ENCODE measurements at regions of chr3 and their contacts with region 1.

Region 1: DNA sequence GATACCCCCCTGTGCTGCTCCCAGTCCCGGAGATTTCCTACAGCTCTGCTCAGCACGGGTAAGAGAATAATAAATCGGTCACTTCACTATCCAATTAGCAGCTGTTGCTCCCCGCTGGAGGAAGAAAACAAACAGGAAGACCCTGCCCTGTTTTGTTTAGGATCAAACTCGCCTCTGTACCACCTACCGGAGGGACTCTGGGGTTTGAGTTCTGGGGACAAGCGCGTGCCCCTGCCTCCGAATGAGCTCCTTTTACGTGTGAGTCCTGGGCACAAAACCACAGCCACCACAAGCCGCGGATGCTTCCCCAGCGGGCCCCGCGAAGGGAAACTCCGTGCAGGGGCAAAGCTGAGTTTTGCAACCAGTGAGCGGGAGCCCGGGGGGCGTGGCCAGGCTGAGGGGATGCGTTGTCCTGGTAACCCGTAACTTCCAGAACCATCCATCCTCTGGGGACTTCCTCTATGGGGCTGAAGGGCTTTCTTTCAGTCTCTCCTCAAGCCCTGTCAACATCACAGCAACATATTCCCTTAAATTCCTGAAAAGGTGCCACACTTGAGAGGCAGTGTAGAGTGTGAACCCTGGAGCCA is 315.7 kb upstream of the PROK2 start:
- DNase-seq: peak; percentile 91
- ATAC-seq: peak; percentile 60
- H3K4me3 Mint-ChIP-seq: peak overlapping the region; percentile 83
- H3K27ac Mint-ChIP-seq: peak overlapping the region; percentile 84
- H3K4me1 Mint-ChIP-seq: peaks cover 73% of the 10 kb centered on the region
- H3K27me3 Mint-ChIP-seq: no peaks in the 10 kb centered on the region
- CTCF ChIP-seq: no peak

Region 2: GRCh38 chr3:71905426-71905825 is 195.3 kb before region 1 on chr3:
- CTCF ChIA-PET with region 1: no interaction called
- POLR2A ChIA-PET with region 1: no interaction called
- intact Hi-C with region 1: loop called (anchors 1 kb)
- DNase-seq: no peak
- ATAC-seq: peak; percentile 90
- H3K4me3 Mint-ChIP-seq: peak overlapping the region; percentile 52
- H3K27ac Mint-ChIP-seq: no peak overlapping the region
- H3K4me1 Mint-ChIP-seq: peaks cover 42% of the 10 kb centered on the region
- H3K27me3 Mint-ChIP-seq: peaks cover 73% of the 10 kb centered on the region
- CTCF ChIP-seq: no peak

Region 3: GRCh38 chr3:72134989-72135451 is 34.3 kb after region 1 on chr3:
- CTCF ChIA-PET with region 1: no interaction called
- POLR2A ChIA-PET with region 1: interaction called, 4 read pairs
- intact Hi-C with region 1: loop called (anchors 1 kb)
- DNase-seq: no peak
- ATAC-seq: peak; percentile 85
- H3K4me3 Mint-ChIP-seq: peak overlapping the region; percentile 3
- H3K27ac Mint-ChIP-seq: peak overlapping the region; percentile 18
- H3K4me1 Mint-ChIP-seq: peaks cover 37% of the 10 kb centered on the region
- H3K27me3 Mint-ChIP-seq: no peaks in the 10 kb centered on the region
- CTCF ChIP-seq: no peak

Region 4: DNA sequence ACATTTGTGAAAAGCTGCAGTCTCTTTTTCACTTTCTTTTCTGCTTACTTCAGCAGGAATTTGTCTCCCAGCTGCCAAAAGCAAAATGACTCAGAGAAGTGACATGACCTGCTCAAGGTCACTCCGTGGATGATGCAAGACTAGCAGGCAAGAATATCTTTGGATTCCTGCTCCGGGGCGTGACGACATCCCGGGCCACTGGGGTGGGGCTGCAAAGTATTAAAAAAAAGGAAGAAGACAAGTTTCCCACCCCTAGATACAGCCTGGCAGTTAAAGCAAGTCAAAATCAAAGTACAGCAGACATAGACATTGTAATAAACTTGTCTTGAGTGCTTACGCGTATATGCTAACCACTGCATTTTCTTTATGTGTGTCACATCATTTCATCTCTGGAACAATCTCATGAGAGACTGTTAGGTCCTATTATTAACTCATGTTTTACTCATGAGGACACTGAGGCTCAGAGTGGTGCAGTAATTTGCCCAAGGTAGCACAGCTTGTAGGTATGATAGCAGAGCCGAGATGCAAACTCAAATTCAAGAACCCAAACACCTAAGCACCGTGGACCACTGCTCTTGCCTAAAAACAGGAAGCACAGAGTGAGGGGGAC is 169.5 kb after region 1 on chr3:
- CTCF ChIA-PET with region 1: no interaction called
- POLR2A ChIA-PET with region 1: interaction called, 3 read pairs
- intact Hi-C with region 1: loop called (anchors 5 kb)
- DNase-seq: no peak
- ATAC-seq: no peak
- H3K4me3 Mint-ChIP-seq: peak overlapping the region; percentile 38
- H3K27ac Mint-ChIP-seq: no peak overlapping the region
- H3K4me1 Mint-ChIP-seq: peaks cover 94% of the 10 kb centered on the region
- H3K27me3 Mint-ChIP-seq: no peaks in the 10 kb centered on the region
- CTCF ChIP-seq: no peak

Region 5: DNA sequence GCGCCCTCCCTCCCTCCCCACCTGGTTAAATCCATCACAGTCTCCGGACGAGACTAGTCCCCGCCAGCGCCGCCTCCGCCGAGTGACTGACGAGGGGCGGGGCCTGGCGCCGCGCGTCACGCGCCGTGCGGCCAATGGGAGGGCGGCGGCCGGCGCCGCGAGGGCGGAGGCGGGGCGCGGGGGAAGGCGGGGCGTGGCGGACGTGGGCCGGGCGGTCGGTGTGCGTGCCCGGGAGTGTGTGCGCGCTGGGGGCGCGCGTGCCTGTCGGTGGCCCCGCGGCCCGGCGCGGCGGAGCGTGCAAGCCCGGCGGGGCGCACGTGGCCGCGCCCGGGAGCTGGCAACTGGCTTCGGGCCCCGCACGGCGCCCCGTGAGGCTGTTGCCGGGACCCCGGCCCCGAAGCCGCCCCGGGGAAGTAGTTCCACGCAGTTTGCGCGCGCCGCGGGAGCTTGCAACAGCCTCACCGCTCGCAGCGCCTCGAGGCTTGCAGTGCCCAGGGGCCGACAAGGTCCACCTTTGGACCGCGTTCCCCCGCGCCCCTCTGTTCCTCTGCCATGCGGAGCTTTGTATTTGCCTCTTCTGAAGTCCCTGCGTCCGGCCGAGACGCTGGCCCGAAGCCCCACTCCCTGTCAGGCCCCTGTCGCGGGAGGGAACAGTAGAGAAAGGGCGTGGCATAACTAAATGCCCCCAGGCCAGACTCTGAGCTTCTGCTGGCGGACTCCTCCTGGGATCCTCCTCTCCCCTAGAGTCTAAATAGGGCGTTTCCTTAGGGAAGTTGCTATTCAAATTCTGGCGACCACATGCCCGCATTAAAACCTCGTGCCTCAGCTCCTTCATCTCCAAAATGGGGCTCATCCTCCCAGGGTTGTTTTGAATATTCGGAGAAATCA is 346.6 kb after region 1 on chr3:
- CTCF ChIA-PET with region 1: interaction called, 3 read pairs
- POLR2A ChIA-PET with region 1: interaction called, 4 read pairs
- intact Hi-C with region 1: loop called (anchors 2 kb)
- DNase-seq: peak; percentile 97
- ATAC-seq: peak; percentile 96
- H3K4me3 Mint-ChIP-seq: peak overlapping the region; percentile 78
- H3K27ac Mint-ChIP-seq: peak overlapping the region; percentile 31
- H3K4me1 Mint-ChIP-seq: peaks cover 47% of the 10 kb centered on the region
- H3K27me3 Mint-ChIP-seq: peaks cover 17% of the 10 kb centered on the region
- CTCF ChIP-seq: no peak

Region 6: DNA sequence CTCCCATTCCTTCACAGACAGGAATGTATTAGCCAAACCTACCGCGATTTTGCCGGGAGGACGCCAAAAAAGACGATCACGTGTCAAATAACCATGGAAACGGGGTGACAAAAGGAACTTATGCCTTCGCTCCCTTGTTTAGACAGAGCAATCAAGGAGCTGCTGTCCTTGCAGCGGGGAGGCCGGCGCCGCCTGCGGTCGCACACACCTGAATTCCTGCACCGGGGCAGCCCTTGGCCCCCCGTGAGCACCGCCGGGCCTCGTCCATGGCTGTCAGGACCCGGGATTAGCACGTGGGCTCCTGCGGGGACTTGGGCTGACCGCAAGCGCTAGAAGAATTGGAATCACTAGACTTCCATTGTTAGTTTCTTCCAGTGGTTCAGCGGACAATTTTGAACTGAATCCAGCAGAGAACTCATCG is 554.4 kb after region 1 on chr3:
- CTCF ChIA-PET with region 1: no interaction called
- POLR2A ChIA-PET with region 1: no interaction called
- intact Hi-C with region 1: no loop called
- DNase-seq: no peak
- ATAC-seq: no peak
- H3K4me3 Mint-ChIP-seq: no peak overlapping the region
- H3K27ac Mint-ChIP-seq: no peak overlapping the region
- H3K4me1 Mint-ChIP-seq: no peaks in the 10 kb centered on the region
- H3K27me3 Mint-ChIP-seq: peaks cover 25% of the 10 kb centered on the region
- CTCF ChIP-seq: no peak

Region 7: DNA sequence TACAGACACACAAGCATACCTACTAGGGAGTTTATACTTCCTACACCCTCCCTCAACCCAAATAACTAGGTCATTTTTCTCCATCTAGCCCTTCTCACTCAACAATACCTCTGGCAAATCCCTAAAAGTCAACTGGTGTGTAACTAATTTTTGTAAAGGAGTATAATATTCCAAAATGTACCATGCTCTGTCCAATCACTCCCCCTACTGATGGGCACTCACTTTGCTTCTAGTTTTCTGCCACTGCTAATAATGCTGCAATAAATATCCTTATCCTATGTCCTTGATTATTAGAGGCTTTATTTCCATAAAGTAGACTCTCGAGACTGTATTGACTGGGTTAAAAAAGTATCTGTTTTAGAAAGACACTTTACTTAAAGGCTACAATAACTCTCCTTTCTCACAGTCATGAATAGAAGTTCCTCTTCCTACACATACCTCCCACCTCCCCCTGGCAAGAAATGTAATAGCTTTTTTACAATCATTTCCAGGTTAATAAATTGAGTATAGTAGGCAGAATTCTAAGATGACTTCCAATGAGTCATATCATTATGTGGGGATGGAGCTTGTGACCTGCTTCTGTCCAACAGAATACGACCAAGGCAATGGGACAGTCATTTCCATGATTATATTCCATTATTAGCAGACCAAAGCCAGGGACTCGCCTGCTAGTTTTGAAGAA is 717.5 kb after region 1 on chr3:
- CTCF ChIA-PET with region 1: no interaction called
- POLR2A ChIA-PET with region 1: no interaction called
- intact Hi-C with region 1: loop called (anchors 5 kb)
- DNase-seq: no peak
- ATAC-seq: no peak
- H3K4me3 Mint-ChIP-seq: no peak overlapping the region
- H3K27ac Mint-ChIP-seq: no peak overlapping the region
- H3K4me1 Mint-ChIP-seq: peaks cover 23% of the 10 kb centered on the region
- H3K27me3 Mint-ChIP-seq: no peaks in the 10 kb centered on the region
- CTCF ChIP-seq: no peak